HCT116 (cell line): ENCODE measurements at regions of chr1 and their contacts with region 1.

Region 1: DNA sequence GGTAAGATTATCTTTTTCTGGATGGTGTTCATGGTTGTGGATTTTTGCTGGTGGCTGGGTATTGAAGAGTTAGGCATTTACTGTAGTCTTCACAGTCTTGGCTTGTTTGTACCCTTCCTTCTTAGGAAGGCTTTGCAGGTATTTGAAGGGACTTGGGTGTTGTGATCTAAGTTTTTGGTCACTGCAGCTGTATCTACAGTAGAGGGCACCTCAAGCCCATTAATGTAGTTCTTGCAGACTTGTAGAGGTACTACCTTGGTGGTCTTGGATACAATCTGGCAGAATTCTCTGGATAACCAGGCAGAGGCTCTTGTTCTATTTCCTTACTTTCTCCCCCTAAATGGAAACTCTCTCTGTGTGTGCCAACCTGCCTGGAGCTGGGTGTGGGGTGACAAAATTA is 155.8 kb upstream of the BRINP3 start:
- DNase-seq: no peak
- ATAC-seq: peak; percentile 44; the same call in 1 of the 2 replicates
- H3K4me3 ChIP-seq: no peak overlapping the region
- H3K27ac ChIP-seq: no peak overlapping the region
- H3K4me1 ChIP-seq: no peaks in the 10 kb centered on the region
- H3K27me3 ChIP-seq: no peaks in the 10 kb centered on the region
- CTCF ChIP-seq: peak; percentile 9 to 36 (median 25); a peak in 3 of 6 replicates
- POLR2A ChIP-seq: no peak
- RAD21 ChIP-seq: peak; percentile 50

Region 2: GRCh38 chr1:190578017-190578416 is 55.5 kb before region 1 on chr1:
- CTCF ChIA-PET with region 1: no interaction called
- POLR2A ChIA-PET with region 1: no interaction called
- RAD21 ChIA-PET with region 1: no interaction called
- intact Hi-C with region 1: no loop called
- DNase-seq: no peak
- ATAC-seq: no peak
- H3K4me3 ChIP-seq: no peak overlapping the region
- H3K27ac ChIP-seq: no peak overlapping the region
- H3K4me1 ChIP-seq: no peaks in the 10 kb centered on the region
- H3K27me3 ChIP-seq: no peaks in the 10 kb centered on the region
- CTCF ChIP-seq: no peak
- POLR2A ChIP-seq: no peak
- RAD21 ChIP-seq: no peak

Region 3: DNA sequence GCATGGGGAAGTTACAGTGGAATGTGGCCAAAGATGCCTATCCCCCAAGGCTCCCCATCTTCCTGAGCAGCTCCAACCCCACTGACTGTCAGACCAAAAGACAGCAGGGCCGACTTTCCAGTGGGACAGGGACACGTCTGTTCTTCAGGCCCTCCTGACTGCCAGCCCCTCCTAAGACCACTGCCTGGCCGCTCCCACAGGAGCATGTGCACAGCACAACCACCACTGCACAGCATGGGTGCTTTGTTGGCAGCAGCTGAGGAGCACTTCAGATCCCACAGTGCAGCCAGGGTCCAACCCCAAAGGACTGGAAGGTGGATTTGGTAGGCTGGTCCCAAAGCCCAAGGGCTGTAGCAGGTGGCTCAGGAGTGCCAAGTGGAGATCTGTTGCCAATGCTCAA is 492.5 kb after region 1 on chr1:
- CTCF ChIA-PET with region 1: no interaction called
- POLR2A ChIA-PET with region 1: no interaction called
- RAD21 ChIA-PET with region 1: no interaction called
- intact Hi-C with region 1: loop called (anchors 10 kb)
- DNase-seq: no peak
- ATAC-seq: no peak
- H3K4me3 ChIP-seq: no peak overlapping the region
- H3K27ac ChIP-seq: no peak overlapping the region
- H3K4me1 ChIP-seq: no peaks in the 10 kb centered on the region
- H3K27me3 ChIP-seq: no peaks in the 10 kb centered on the region
- CTCF ChIP-seq: no peak
- POLR2A ChIP-seq: no peak
- RAD21 ChIP-seq: no peak

Region 4: GRCh38 chr1:192311281-192311680 is 1677.8 kb after region 1 on chr1:
- CTCF ChIA-PET with region 1: no interaction called
- POLR2A ChIA-PET with region 1: no interaction called
- RAD21 ChIA-PET with region 1: no interaction called
- intact Hi-C with region 1: loop called (anchors 10 kb)
- DNase-seq: peak; percentile 31
- ATAC-seq: peak; percentile 36; the same call in 1 of the 2 replicates
- H3K4me3 ChIP-seq: no peak overlapping the region
- H3K27ac ChIP-seq: no peak overlapping the region
- H3K4me1 ChIP-seq: no peaks in the 10 kb centered on the region
- H3K27me3 ChIP-seq: no peaks in the 10 kb centered on the region
- CTCF ChIP-seq: peak; percentile 26 to 63 (median 37); a peak in 4 of 6 replicates
- POLR2A ChIP-seq: no peak
- RAD21 ChIP-seq: peak; percentile 74

Region 5: GRCh38 chr1:192445848-192446489 is 1812.5 kb after region 1 on chr1:
- CTCF ChIA-PET with region 1: no interaction called
- POLR2A ChIA-PET with region 1: no interaction called
- RAD21 ChIA-PET with region 1: no interaction called
- intact Hi-C with region 1: loop called (anchors 5 kb)
- DNase-seq: peak; percentile 15
- ATAC-seq: no peak
- H3K4me3 ChIP-seq: no peak overlapping the region
- H3K27ac ChIP-seq: no peak overlapping the region
- H3K4me1 ChIP-seq: peaks cover 2 to 9% of the 10 kb centered on the region in 2 experiments; a peak in 2 of 4 replicates
- H3K27me3 ChIP-seq: no peaks in the 10 kb centered on the region
- CTCF ChIP-seq: peak; percentile 51 to 79 (median 55); a peak in 5 of 6 replicates
- POLR2A ChIP-seq: no peak
- RAD21 ChIP-seq: peak; percentile 83